Natural killer cell (primary cell): ENCODE measurements at regions of chr10 and their contacts with region 1.

Region 1: DNA sequence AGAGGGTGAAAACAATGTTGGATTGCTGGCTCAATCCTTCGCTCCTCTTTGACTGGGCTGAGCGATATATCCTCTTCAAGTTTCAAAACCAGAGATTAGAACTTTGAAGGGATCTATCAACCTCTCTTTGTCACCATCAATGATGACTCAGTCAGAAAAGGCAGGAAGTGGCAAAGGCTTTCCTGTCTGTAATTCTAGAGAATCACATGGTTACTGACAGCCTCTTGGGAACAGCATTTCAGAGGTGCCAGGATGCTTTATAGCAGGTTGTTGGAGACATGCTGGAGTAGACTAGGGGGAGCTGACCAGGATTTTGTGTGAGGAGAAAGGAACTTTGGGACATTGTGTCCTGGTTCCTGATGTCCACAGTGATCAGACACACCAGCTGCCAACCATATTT is 81.3 kb downstream of the PRKCQ start:
- DNase-seq: peak in 1 of 2 donors; percentile 83
- ATAC-seq: peak; percentile 74 to 86 (median 86)
- H3K4me3 ChIP-seq: no peak overlapping the region
- H3K4me3 Mint-ChIP-seq: peak overlapping the region; percentile 75
- H3K27ac ChIP-seq: peak overlapping the region; percentile 66
- H3K27ac Mint-ChIP-seq: no peak overlapping the region
- H3K4me1 ChIP-seq: peaks cover 40% of the 10 kb centered on the region
- H3K4me1 Mint-ChIP-seq: peaks cover 47 to 52% of the 10 kb centered on the region in 2 donors
- H3K27me3 ChIP-seq: no peaks in the 10 kb centered on the region
- H3K27me3 Mint-ChIP-seq: no peaks in the 10 kb centered on the region
- CTCF ChIP-seq: no peak

Region 2: GRCh38 chr10:5840314-5841307 is 658.2 kb before region 1 on chr10:
- intact Hi-C with region 1: no loop called
- DNase-seq: no peak
- ATAC-seq: peak in 2 of 3 donors; percentile 35 to 43
- H3K4me3 ChIP-seq: peak overlapping the region; percentile 29
- H3K4me3 Mint-ChIP-seq: no peak overlapping the region
- H3K27ac ChIP-seq: peak overlapping the region; percentile 78
- H3K27ac Mint-ChIP-seq: no peak overlapping the region
- H3K4me1 ChIP-seq: peaks cover 9% of the 10 kb centered on the region
- H3K4me1 Mint-ChIP-seq: no peaks in the 10 kb centered on the region
- H3K27me3 ChIP-seq: no peaks in the 10 kb centered on the region
- H3K27me3 Mint-ChIP-seq: peaks cover 0 to 11% of the 10 kb centered on the region in 2 donors
- CTCF ChIP-seq: no peak

Region 3: DNA sequence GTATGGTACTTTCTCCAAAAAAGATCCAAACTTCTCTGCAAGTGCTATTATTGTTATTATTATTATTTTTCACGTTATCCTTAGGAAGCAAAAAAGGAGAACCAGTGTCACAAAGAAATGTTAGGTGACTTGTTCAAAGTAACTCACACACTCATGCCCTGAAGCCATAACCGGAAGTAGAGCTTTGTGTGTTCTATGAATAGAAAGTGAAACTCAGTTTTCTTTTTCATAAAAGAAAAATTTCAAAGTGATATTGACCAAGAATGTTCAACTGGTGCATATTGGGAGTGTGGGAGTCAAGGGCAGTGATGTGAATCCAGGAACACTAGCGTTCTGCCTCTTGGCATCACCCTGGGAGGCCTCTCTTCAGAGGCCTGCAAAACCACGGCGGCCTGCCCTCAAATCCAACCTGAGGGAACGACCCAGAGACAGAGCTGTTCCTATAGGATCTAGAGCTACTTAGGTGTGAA is 24.8 kb before region 1 on chr10:
- intact Hi-C with region 1: no loop called
- DNase-seq: peak; percentile 34 to 81
- ATAC-seq: peak; percentile 78 to 86 (median 83)
- H3K4me3 ChIP-seq: peak overlapping the region; percentile 39
- H3K4me3 Mint-ChIP-seq: peak overlapping the region; percentile 94
- H3K27ac ChIP-seq: peak overlapping the region; percentile 97
- H3K27ac Mint-ChIP-seq: peak overlapping the region; percentile 99
- H3K4me1 ChIP-seq: peaks cover 21% of the 10 kb centered on the region
- H3K4me1 Mint-ChIP-seq: peaks cover 51 to 64% of the 10 kb centered on the region in 2 donors
- H3K27me3 ChIP-seq: no peaks in the 10 kb centered on the region
- H3K27me3 Mint-ChIP-seq: no peaks in the 10 kb centered on the region
- CTCF ChIP-seq: no peak

Region 4: GRCh38 chr10:6530211-6530840 is 31.6 kb after region 1 on chr10:
- intact Hi-C with region 1: loop called (anchors 2 kb)
- DNase-seq: peak; percentile 69 to 88
- ATAC-seq: peak; percentile 87 to 93 (median 90)
- H3K4me3 ChIP-seq: peak overlapping the region; percentile 11
- H3K4me3 Mint-ChIP-seq: peak overlapping the region; percentile 96
- H3K27ac ChIP-seq: peak overlapping the region; percentile 89
- H3K27ac Mint-ChIP-seq: peak overlapping the region; percentile 98
- H3K4me1 ChIP-seq: peaks cover 47% of the 10 kb centered on the region
- H3K4me1 Mint-ChIP-seq: peaks cover 75 to 88% of the 10 kb centered on the region in 2 donors
- H3K27me3 ChIP-seq: no peaks in the 10 kb centered on the region
- H3K27me3 Mint-ChIP-seq: no peaks in the 10 kb centered on the region
- CTCF ChIP-seq: no peak

Region 5: GRCh38 chr10:6563075-6563474 is 64.3 kb after region 1 on chr10:
- intact Hi-C with region 1: loop called (anchors 2 kb)
- DNase-seq: peak in 1 of 2 donors; percentile 63
- ATAC-seq: peak; percentile 70 to 77 (median 71)
- H3K4me3 ChIP-seq: no peak overlapping the region
- H3K4me3 Mint-ChIP-seq: peak overlapping the region; percentile 65
- H3K27ac ChIP-seq: peak overlapping the region; percentile 75
- H3K27ac Mint-ChIP-seq: peak overlapping the region; percentile 84 to 95
- H3K4me1 ChIP-seq: peaks cover 44% of the 10 kb centered on the region
- H3K4me1 Mint-ChIP-seq: peaks cover 79 to 84% of the 10 kb centered on the region in 2 donors
- H3K27me3 ChIP-seq: no peaks in the 10 kb centered on the region
- H3K27me3 Mint-ChIP-seq: no peaks in the 10 kb centered on the region
- CTCF ChIP-seq: no peak

Region 6: GRCh38 chr10:6580279-6581029 is 81.7 kb after region 1 on chr10:
- intact Hi-C with region 1: loop called (anchors 2 kb)
- DNase-seq: peak; percentile 87 to 92
- ATAC-seq: peak; percentile 75 to 92 (median 87)
- H3K4me3 ChIP-seq: peak overlapping the region; percentile 67
- H3K4me3 Mint-ChIP-seq: peak overlapping the region; percentile 95
- H3K27ac ChIP-seq: peak overlapping the region; percentile 89
- H3K27ac Mint-ChIP-seq: peak overlapping the region; percentile 85 to 92
- H3K4me1 ChIP-seq: peaks cover 51% of the 10 kb centered on the region
- H3K4me1 Mint-ChIP-seq: peaks cover 79 to 90% of the 10 kb centered on the region in 2 donors
- H3K27me3 ChIP-seq: no peaks in the 10 kb centered on the region
- H3K27me3 Mint-ChIP-seq: no peaks in the 10 kb centered on the region
- CTCF ChIP-seq: peak; percentile 68

Region 7: DNA sequence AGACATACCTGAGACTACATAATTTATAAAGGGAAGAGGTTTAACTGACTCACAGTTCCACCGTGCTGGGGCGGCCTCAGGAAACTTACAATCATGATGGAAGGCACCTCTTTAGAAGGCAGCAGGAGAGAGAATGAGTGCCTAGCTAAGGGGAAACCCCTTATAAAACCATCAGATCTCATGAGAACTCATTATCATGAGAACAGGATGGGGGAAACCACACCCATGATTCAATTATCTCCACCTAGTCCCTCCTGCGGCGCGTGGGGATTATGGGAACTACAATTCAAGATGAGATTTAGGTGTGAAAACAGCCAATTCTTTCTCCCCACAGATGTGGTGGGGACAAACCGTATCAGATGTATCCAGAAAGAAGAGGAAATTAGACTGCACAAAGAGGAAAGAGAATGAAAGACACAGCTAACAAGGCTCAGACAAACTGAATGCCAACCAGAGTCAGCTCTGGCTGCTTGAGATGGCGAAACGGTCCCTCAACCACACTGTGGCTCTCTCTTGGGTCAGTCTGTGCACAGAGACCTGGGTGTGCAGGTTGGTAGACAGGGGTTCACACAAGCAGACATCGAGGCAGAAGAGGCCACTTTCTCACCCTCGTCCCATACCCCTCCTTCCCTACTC is 536.5 kb after region 1 on chr10:
- intact Hi-C with region 1: loop called (anchors 10 kb)
- DNase-seq: peak; percentile 32 to 34
- ATAC-seq: peak; percentile 51 to 60 (median 53)
- H3K4me3 ChIP-seq: no peak overlapping the region
- H3K4me3 Mint-ChIP-seq: peak overlapping the region; percentile 84
- H3K27ac ChIP-seq: peak overlapping the region; percentile 50
- H3K27ac Mint-ChIP-seq: peak overlapping the region; percentile 93
- H3K4me1 ChIP-seq: peaks cover 38% of the 10 kb centered on the region
- H3K4me1 Mint-ChIP-seq: peaks cover 93 to 94% of the 10 kb centered on the region in 2 donors
- H3K27me3 ChIP-seq: no peaks in the 10 kb centered on the region
- H3K27me3 Mint-ChIP-seq: no peaks in the 10 kb centered on the region
- CTCF ChIP-seq: no peak